ENCODE measurements at regions of chr1 and their contacts with region 1.

Region 1: DNA sequence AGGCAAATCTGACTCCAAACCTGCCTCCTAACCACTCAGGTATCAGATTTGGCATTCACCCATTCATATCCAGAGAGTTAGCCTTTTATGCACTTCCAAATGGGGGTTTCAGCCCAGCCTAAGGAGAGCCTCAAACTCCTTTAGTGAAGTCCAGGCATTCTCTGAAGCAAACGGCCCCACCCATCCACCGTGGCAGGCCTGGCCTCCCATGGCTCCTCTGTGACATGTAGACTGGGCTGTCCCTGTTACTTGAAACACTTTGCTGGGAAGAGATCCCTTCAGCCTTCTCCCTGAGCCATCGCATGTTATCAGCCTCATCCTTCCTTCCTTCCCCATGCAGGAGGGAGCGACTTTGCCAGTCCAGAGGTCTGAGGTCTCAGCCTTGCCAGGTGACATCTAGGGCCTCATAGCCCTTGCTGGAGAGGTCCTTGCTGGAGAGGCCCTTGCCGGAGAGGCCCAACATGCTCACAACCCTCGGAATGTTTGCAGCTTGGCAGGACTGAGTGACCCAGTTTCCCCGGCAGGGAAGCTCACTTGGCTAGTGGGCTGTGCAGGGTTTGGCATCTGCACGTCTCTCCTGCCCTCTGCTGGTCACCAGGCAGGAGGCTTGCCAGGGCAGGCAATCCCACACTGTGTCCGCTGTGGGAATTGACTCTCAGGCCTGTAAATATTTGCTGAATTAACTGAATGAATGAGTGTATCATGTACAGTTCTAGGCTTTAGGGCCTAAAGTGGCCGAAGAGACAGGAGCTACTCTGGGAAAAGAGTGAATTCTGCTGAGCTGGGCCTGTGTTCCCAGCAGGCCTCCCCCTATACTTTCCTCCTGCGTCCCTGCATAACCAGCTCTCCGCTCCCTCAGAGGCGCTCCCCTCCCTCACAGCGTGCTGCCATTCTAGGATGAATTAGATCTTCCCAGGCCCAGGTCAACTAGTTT is 26.7 kb upstream of the RBM15 start:
- DNase-seq: peak; percentile 88
- ATAC-seq: peak; percentile 97

Region 2: DNA sequence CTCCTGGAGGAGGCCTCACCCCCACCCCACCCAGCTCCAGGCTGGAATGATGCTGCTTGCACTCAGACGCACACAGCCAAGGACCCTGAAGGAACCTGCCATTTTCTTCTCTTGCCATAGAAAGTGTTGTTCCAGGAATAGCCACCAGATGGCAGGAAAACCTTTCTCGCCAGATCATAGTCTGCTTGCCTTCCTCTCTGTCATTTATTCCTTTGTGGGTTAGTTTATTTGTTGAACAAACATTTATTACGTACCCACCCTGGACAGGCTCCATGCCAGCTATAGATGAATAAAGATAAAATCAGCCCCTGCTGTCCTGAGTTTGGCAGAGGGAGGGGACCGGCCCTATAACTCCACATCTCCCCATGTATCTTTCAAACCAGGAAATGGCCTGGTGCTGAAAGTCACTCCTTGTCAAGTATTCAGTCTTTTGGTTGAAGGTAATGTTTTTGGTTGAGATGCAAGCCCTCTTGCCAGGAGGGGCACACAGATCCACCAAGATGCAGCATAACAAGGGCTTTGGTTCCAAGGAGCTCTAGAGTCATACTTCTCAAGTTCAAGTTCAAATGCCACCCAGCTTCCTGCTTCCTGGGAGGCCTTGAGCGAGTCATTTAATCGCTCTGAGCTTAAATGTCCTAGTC is 109.3 kb before region 1 on chr1:
- intact Hi-C with region 1: loop called (anchors 1 kb)
- DNase-seq: no peak
- ATAC-seq: peak; percentile 71

Region 3: DNA sequence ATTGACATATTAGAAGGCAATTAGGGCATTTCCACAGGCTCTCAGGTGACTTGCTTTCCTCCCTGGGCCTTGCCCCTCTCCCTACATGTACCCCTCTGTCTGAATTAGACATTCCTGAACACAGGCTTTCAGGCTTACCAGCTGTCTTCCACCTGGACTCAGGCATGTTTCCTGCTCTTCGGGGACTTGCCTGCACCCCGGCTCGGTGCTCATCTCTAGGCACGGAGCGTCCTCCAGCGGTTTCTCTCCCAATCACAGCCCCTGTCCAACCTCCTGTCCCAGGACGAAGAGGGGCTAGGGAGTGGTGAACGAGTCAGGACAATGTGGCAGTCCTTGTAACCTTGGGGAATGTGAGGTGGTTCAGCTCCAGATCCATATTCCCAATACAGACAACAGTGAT is 142.7 kb after region 1 on chr1:
- intact Hi-C with region 1: loop called (anchors 10 kb)
- DNase-seq: no peak
- ATAC-seq: no peak

Region 4: DNA sequence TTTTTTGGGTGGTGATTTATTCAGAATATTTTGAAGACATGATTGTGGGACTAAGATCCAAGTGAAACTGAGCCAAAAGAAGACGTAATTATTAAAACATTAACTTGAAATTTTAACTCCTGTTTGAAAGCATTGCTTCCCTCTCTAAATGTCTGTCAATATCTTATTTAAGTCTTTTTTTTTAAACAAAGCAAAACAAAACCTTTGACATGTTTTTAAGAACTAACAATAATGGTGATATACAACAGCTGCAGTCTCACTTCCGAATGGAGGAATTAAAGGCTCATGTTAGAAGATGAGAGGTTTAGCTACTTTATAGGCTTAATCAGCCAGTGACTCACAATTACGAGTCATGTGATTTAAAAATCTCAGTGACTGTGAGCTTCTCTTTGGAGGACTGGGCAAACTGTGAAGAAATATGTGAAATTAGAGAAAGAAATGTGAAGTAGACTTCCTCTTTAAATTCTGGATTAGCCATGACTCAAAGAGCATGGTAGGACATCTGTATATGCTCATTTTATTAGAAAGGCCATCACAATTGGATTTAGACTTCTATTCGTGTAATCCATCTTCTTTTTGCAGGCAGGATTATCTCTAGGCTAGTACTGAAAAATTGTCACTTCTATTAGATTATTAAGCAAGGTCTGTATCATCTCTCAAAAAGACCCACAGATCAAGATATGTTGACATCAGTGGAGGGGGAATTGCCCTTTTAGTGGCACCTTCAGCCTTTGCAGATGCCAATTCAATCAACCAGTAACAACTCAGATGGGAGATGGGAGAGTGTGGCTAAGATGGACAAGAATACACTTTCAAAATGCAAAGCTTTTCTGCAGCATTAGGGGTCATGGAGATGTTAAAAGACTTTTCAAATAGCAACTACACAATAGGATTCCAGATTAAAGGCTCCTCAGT is 333.6 kb after region 1 on chr1:
- intact Hi-C with region 1: no loop called
- DNase-seq: no peak
- ATAC-seq: peak; percentile 46

Measured in sciatic nerve (tissue), 2 donors.